Activated CD4-positive, alpha-beta T cell treated with anti-CD3 and anti-CD28 coated beads for 36 hours (primary cell): ENCODE measurements at regions of chr4 and their contacts with region 1.

Region 1: GRCh38 chr4:84482564-84483563 is 16.2 kb downstream of the NKX6-1 start:
- DNase-seq: peak; percentile 61
- ATAC-seq: peak; percentile 42
- H3K4me3 Mint-ChIP-seq: no peak overlapping the region
- H3K27ac Mint-ChIP-seq: no peak overlapping the region
- H3K4me1 Mint-ChIP-seq: peaks cover 13% of the 10 kb centered on the region
- H3K27me3 Mint-ChIP-seq: peaks cover 85% of the 10 kb centered on the region

Region 2: DNA sequence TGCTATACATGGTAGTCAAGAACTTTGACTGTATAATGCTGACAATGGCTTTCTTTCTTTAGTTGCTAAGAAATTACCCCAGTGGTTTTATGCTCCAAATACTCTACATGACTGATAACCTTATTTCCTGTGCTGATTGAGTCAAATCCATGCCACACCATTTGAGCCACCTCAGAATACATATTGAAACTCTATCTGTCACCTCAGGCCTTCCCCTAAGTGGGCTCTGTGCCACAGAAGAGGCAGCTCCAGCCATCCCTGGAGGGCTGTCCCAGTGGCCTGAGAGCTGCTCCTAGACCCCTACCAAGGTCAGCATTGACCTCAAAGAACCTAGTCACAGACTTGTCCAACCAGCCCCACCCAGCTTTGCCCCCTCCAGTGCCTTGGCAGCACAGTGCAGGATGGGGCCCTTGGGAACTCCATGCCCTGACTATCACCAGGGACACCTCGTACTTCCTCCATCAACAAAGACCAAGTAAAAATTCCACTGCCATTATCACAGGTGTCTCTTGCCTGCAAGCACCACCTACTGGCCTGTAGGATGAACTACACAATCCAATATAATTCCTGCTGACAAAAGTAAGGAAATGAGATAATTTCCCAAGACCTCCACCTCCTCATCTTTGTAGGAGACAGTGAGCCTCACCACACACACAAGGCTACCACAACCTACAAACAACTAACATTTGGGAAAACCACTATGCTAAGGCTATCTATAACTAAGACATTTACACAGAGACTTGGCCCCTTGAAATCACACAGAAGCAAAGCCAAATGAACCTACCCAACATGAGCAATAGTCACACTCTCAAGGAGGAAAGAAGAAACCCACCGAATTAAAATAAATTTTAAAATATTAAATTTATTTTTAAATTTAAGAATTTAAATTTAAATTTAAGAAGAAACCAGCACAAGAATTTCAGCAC is 223.7 kb before region 1 on chr4:
- CTCF ChIA-PET with region 1: no interaction called
- POLR2A ChIA-PET with region 1: no interaction called
- intact Hi-C with region 1: no loop called
- DNase-seq: no peak
- ATAC-seq: no peak
- H3K4me3 Mint-ChIP-seq: no peak overlapping the region
- H3K27ac Mint-ChIP-seq: no peak overlapping the region
- H3K4me1 Mint-ChIP-seq: no peaks in the 10 kb centered on the region
- H3K27me3 Mint-ChIP-seq: peaks cover 2% of the 10 kb centered on the region

Region 3: DNA sequence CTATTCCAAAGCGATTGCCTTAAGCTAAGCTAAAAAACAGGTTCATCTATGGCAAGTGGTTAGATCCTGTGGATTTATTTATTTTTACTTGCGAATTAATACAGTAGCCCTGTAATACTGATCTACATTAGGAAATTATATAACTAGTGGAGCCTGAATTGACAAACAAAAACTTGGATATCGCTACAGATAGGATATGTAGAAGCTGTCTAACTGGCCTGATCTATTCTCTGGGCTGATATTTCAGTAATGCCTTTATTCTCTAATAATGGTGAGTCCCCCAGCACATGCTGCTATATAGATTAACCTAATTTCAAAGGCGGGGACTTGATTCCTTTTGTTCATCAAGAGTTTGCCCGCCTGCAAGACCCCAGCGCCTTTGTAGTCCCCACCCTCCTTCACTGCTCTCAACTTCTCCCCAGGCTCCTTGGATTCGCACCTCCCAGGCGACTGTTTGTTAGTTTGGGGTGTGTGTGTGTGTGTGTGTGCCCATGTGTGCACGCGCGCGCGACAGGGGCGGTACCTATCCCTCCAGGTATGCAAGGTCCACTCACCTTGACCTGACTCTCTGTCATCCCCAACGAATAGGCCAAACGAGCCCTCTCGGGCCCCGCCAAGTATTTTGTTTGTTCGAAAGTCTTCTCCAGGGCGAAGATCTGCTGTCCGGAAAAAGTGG is 12.4 kb after region 1 on chr4:
- CTCF ChIA-PET with region 1: interaction called, 5 read pairs
- POLR2A ChIA-PET with region 1: no interaction called
- intact Hi-C with region 1: loop called (anchors 1 to 2 kb)
- DNase-seq: no peak
- ATAC-seq: no peak
- H3K4me3 Mint-ChIP-seq: no peak overlapping the region
- H3K27ac Mint-ChIP-seq: no peak overlapping the region
- H3K4me1 Mint-ChIP-seq: peaks cover 22% of the 10 kb centered on the region
- H3K27me3 Mint-ChIP-seq: peaks cover 77% of the 10 kb centered on the region